IMR-90 (cell line): ENCODE measurements at regions of chr1 and their contacts with region 1.

Region 1: GRCh38 chr1:2556277-2556677 is at the start of gene TNFRSF14:
- DNase-seq: peak; percentile 35
- ATAC-seq: peak; percentile 79
- H3K4me3 ChIP-seq: peak within 1 kb of the TSS; percentile 44
- H3K27ac ChIP-seq: peak within 1 kb of the TSS; percentile 36; the same call in 1 of the 2 replicates
- H3K4me1 ChIP-seq: no peaks in the 10 kb centered on the region
- H3K27me3 ChIP-seq: no peaks in the 10 kb centered on the region; the same call in 1 of the 2 replicates
- CTCF ChIP-seq: peak; percentile 7; the same call in 1 of the 2 replicates
- POLR2A ChIP-seq: no peak
- RAD21 ChIP-seq: no peak
- total RNA-seq, gene TNFRSF14: 1.3 and 1.7 TPM in 2 replicates

Region 2: DNA sequence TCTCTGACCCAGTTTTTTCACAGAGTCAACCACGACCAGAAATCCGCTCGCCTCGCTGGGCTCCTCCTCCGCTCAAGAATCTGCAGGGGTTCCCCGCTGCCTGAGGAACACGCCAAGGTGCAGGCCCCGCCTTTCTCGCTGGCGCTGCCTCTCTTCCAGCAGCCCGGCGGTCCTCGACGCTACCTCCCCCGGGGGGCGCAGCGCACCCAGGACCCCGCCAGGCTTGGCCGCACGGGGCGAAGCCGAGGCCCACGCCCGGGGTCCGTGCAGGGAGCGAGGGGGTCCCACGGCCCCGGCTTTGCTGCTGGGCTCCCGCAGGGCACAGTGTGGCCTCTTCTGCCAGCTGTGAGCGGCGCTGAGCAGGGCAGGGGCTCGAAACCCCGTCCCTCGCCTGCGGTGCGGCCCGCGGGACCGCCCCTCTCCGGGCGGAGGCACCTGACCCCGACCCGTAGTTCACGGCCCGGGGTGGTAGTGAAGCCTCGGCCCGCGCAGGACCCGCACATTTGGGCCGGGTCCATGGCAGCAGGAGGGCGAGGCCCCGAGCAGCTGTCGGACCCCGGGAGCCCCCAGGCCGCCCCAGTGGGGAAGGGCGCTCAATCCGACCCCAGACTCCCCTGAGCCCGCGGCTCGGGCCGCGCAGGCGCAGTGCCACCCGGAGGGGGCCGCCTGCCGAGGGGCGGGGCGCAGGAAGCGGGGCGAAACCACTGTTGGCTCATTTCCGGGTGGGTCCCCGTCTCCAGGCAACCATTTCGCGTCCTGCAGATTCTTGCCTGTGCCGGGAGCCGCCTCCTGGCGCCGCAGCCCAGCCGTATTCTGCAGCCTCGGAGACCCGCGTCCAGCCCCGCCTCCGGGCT is 86.5 kb after region 1 on chr1:
- CTCF ChIA-PET with region 1: no interaction called
- POLR2A ChIA-PET with region 1: no interaction called
- dilution Hi-C with region 1: no loop called
- in situ Hi-C with region 1: no loop called
- intact Hi-C with region 1: loop called (anchors 1 kb)
- DNase-seq: peak; percentile 84
- ATAC-seq: peak; percentile 90
- H3K4me3 ChIP-seq: peak overlapping the region; percentile 58
- H3K27ac ChIP-seq: peak overlapping the region; percentile 13
- H3K4me1 ChIP-seq: no peaks in the 10 kb centered on the region
- H3K27me3 ChIP-seq: no peaks in the 10 kb centered on the region
- CTCF ChIP-seq: 0 out of 2 replicates have a peak, but pooled peaks have one; percentile 20
- POLR2A ChIP-seq: no peak
- RAD21 ChIP-seq: no peak

Region 3: DNA sequence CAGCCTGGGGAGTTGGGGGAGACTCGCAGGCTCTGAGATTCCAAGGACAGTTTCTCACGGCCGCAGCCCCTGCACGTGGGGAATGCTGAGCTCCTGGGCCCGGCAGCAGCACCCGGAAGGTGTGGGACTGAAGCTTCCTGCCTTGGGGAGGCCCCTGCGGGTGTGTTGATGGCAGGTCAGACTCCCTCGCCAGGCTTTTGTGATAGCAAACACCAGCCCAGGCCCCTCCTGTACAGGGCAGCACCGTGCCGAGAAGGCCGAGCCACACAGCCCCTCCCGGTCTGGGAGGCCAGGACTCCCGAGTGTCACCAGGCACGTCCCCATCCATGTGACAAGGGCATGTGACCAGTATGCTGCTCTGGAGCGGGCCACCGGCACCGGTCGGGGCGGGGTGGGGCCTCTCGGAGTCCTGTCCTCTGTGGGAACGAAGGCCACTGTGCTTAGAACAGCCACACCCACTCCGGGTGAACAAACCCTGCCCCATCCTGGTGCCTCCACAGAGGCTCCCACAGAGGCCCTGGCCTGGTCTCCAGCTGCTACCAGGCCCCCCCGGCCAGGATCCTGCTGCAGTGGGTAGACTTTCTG is 867.1 kb after region 1 on chr1:
- CTCF ChIA-PET with region 1: no interaction called
- POLR2A ChIA-PET with region 1: no interaction called
- dilution Hi-C with region 1: no loop called
- in situ Hi-C with region 1: no loop called
- intact Hi-C with region 1: loop called (anchors 2 kb)
- DNase-seq: no peak
- ATAC-seq: no peak
- H3K4me3 ChIP-seq: no peak overlapping the region
- H3K27ac ChIP-seq: no peak overlapping the region
- H3K4me1 ChIP-seq: no peaks in the 10 kb centered on the region
- H3K27me3 ChIP-seq: peaks cover 9% of the 10 kb centered on the region; the same call in 1 of the 2 replicates
- CTCF ChIP-seq: no peak
- POLR2A ChIP-seq: no peak
- RAD21 ChIP-seq: no peak